ENCODE measurements at regions of chr11 and their contacts with region 1.

Region 1: DNA sequence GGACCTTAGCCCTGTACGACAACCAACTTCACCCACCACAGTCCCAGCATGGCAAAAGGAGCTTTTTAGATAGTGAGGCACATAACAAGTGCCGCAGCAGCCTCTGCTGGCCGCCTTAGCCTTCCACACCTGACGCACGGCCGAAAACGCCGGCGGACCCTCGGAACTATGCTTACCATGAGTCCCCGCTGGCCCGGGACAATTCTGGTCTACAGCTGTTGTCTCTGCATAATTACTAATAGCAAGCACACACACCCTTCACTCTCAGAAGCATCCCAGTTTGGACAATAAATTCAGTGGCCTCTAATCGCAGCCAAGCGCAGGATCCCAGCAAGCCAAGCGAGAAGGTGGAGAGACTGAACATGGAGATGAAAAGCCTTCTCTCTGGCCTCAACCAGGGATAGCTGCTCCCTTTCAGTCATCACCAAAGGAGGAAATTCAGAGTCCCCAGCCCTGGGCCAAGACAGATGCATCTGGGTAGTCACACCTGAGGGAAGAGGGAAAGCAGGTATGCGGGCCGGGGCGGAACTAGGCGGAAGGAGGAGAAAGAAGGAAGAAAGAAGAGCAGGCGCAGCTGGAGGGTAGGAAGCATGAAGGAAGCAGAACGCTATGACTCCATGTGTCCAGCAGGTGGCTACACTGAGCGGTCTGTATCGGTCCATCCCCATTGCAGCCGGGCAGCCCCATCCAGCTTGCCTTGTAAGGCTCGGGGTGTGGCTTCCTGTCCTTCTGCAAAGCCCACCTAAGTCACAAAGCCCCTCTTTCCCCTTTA is 40.3 kb downstream of the BUD13 start:
- DNase-seq: no peak
- H3K4me3 ChIP-seq: no peak overlapping the region
- H3K27me3 ChIP-seq: peaks cover 25% of the 10 kb centered on the region
- CTCF ChIP-seq: peak; percentile 90

Region 2: DNA sequence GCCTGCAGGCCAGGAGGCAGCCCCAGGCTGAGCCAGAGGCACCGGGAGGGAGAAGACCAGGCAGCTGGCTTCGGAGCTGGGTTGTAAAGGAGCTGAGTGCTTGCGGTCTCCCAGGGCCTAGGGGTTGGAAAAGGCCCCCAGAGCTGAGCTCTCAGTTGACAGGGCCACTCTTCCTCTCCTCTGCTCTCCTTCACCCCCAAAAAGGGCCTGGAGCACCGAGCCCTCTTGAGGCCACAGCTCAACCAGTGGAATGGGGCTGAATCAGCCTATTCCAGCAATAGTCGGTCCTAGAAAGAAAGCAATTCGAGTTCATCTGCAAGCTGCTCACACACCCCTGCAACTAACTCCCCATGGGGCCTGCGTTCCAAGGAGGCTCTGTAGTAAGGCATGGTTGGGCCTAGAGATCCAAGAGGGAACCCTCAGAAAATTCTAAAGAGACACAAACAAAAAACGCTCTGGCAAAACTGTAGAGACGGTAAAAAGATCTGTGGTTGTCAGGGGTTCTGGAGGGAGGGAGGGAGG is 164.7 kb before region 1 on chr11:
- CTCF ChIA-PET with region 1: no interaction called
- POLR2A ChIA-PET with region 1: no interaction called
- DNase-seq: no peak
- H3K4me3 ChIP-seq: no peak overlapping the region
- H3K27me3 ChIP-seq: no peaks in the 10 kb centered on the region
- CTCF ChIP-seq: no peak

Region 3: GRCh38 chr11:116595305-116595880 is 137.1 kb before region 1 on chr11:
- CTCF ChIA-PET with region 1: no interaction called
- POLR2A ChIA-PET with region 1: no interaction called
- DNase-seq: no peak
- H3K4me3 ChIP-seq: no peak overlapping the region
- H3K27me3 ChIP-seq: no peaks in the 10 kb centered on the region
- CTCF ChIP-seq: no peak

Region 4: DNA sequence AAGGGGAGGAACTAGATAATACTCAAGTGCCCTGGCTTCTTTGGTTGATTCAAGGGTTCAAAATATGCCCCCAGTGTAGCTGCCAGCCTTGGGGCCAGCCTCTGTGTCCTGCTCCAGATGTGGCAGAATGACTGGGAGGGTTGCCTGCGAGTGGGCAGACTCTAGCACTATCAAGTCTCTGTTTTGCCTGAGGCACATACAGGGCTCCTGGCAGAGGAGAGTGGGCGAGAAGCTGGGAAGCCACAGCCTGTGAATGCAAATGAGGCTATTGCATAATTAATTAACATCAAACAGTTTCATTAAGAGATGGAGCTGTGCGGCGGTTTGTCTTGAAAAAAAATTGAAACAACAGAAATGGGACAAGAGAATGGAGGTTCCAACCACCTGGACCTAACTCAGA is 10.5 kb before region 1 on chr11:
- CTCF ChIA-PET with region 1: interaction called, 22 read pairs
- POLR2A ChIA-PET with region 1: no interaction called
- DNase-seq: no peak
- H3K4me3 ChIP-seq: no peak overlapping the region
- H3K27me3 ChIP-seq: peaks cover 21% of the 10 kb centered on the region
- CTCF ChIP-seq: no peak

Region 5: GRCh38 chr11:117226388-117227385 is 494.2 kb after region 1 on chr11:
- CTCF ChIA-PET with region 1: interaction called, 12 read pairs
- POLR2A ChIA-PET with region 1: no interaction called
- DNase-seq: no peak
- H3K4me3 ChIP-seq: no peak overlapping the region
- H3K27me3 ChIP-seq: no peaks in the 10 kb centered on the region
- CTCF ChIP-seq: peak; percentile 77

Measured in BJ (cell line).